ENCODE measurements at regions of chr1 and their contacts with region 1.

Region 1: DNA sequence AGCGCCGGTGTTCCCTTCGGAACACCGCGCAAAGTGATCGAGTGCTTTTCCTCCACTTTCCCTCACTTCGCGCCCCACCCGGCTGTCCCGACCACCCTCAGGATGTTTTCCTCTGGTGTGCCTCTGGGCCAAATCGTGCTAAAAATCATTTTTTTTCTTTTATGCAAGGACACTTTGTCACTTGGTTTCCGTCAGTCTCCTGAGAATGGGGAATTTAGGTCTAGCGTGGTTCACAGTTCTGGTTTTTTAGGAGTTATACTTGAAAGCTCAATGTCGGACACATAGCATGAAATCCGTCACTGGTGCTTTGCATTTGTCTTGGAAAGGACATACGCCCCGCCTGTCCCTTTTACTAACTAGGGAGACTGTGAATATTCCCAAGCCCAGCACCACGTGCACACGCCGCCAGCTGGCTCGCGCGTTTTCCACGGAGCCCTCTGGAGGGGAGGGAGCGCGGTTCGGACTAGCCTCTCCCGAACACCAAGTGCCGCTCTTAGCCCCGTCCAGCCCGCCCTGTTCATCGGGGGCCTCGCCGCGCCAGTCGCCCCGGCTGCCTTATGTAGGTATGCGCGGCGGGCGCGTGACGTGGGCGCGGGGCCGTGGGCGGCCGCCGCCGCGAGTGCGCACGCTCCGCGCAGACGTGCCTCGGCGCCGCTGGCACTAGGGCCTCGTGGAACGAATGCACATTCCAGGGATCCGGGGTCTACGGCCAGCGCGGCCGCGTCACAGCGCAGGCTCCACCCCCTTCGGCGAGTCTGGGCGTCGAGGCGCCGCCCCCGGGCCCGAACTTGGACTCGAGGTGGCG is 572 bp upstream of the IRF2BP2 start:
- DNase-seq: no peak
- H3K4me3 ChIP-seq: peak overlapping the region; percentile 56 to 62
- H3K27ac ChIP-seq: peak overlapping the region; percentile 99
- H3K4me1 ChIP-seq: peaks cover 46% of the 10 kb centered on the region
- H3K27me3 ChIP-seq: no peaks in the 10 kb centered on the region
- CTCF ChIP-seq: no peak
- POLR2A ChIP-seq: peak in 1 of 2 donors; percentile 94

Region 2: GRCh38 chr1:234271243-234271606 is 339.3 kb before region 1 on chr1:
- intact Hi-C with region 1: no loop called
- DNase-seq: no peak
- H3K4me3 ChIP-seq: no peak overlapping the region
- H3K27ac ChIP-seq: no peak overlapping the region
- H3K4me1 ChIP-seq: no peaks in the 10 kb centered on the region
- H3K27me3 ChIP-seq: no peaks in the 10 kb centered on the region
- CTCF ChIP-seq: no peak
- POLR2A ChIP-seq: no peak

Region 3: GRCh38 chr1:234326497-234327366 is 283.8 kb before region 1 on chr1:
- intact Hi-C with region 1: no loop called
- DNase-seq: no peak
- H3K4me3 ChIP-seq: peak overlapping the region in 1 of 2 donors; percentile 16
- H3K27ac ChIP-seq: no peak overlapping the region
- H3K4me1 ChIP-seq: no peaks in the 10 kb centered on the region
- H3K27me3 ChIP-seq: no peaks in the 10 kb centered on the region
- CTCF ChIP-seq: peak in 2 of 3 experiments; percentile 30 to 48
- POLR2A ChIP-seq: no peak

Region 4: GRCh38 chr1:234533975-234534876 is 76.3 kb before region 1 on chr1:
- intact Hi-C with region 1: loop called (anchors 2 kb)
- DNase-seq: peak in 1 of 2 donors; percentile 98
- H3K4me3 ChIP-seq: no peak overlapping the region
- H3K27ac ChIP-seq: peak overlapping the region; percentile 98
- H3K4me1 ChIP-seq: peaks cover 93% of the 10 kb centered on the region
- H3K27me3 ChIP-seq: no peaks in the 10 kb centered on the region
- CTCF ChIP-seq: no peak
- POLR2A ChIP-seq: no peak

Region 5: GRCh38 chr1:235077571-235078479 is 467.3 kb after region 1 on chr1:
- intact Hi-C with region 1: loop called (anchors 2 kb)
- DNase-seq: no peak
- H3K4me3 ChIP-seq: no peak overlapping the region
- H3K27ac ChIP-seq: peak overlapping the region; percentile 55
- H3K4me1 ChIP-seq: peaks cover 91% of the 10 kb centered on the region
- H3K27me3 ChIP-seq: no peaks in the 10 kb centered on the region
- CTCF ChIP-seq: no peak
- POLR2A ChIP-seq: no peak

Region 6: GRCh38 chr1:236064674-236065508 is 1454.3 kb after region 1 on chr1 and contains the start of gene NID1:
- intact Hi-C with region 1: loop called (anchors 10 kb)
- DNase-seq: peak in 1 of 2 donors; percentile 94
- H3K4me3 ChIP-seq: peak within 1 kb of the TSS; percentile 59 to 75
- H3K27ac ChIP-seq: peak within 1 kb of the TSS; percentile 98
- H3K4me1 ChIP-seq: peaks cover 34% of the 10 kb centered on the region
- H3K27me3 ChIP-seq: no peaks in the 10 kb centered on the region
- CTCF ChIP-seq: no peak
- POLR2A ChIP-seq: peak in 1 of 2 donors; percentile 83
- total RNA-seq, gene NID1: 154 TPM

Measured in vagina (tissue), 2 donors.